ENCODE measurements at regions of chr5 and their contacts with region 1.

Region 1: DNA sequence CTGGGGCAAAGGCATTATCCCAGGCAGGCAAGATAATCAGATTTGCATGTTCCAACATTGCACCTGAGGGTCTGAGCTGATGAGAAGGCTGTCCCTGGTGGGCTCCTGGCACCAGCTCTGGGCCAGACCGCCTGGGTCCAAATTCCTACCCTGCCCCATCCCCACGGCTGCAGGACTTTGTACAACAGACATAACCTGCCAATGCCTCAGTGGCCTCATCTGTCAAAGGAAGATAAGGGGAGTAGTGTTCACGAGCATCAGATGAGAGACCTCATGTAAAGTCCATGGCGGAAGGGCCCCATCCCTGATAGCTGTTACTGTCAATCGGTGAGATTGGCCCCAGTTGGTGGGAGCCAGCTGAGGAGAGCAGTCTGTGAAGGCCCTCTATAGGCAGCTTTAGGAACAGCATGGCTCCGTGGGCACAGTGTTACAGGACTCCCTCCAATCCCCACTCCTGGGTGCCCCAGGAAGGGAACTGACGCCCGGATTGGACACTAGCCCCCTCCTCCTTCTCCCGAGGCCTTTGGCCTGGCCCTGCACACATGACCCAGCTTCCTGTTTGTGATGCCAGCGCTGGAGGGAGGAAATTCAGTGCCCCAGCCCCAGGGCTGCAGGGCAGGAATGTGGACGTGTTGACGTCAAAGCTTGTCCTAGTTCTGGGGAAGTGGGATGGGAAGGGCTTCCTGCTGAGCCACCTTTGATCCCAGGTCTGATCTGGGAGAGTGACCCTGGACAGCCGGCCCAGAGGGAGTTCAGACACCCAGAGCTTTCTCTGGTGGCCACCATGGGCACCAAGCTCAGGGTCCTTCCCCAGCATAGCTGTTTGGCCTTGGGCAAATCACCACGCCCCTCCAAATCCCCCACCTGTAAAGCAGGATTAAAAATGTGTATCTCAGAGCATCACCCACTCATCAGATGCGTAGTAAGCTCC is 56.2 kb downstream of the DUSP1 start:
- DNase-seq: peak; percentile 91
- ATAC-seq: peak; percentile 83
- H3K4me3 ChIP-seq: peak overlapping the region in 2 of 3 experiments; percentile 15 to 49; a peak in 4 of 6 replicates
- H3K27ac ChIP-seq: peak overlapping the region; percentile 66
- H3K4me1 ChIP-seq: peaks cover 51% of the 10 kb centered on the region
- H3K27me3 ChIP-seq: no peaks in the 10 kb centered on the region
- CTCF ChIP-seq: peak; percentile 84
- EP300 ChIP-seq: peak in 1 of 2 experiments; percentile 69; a peak in 1 of 4 replicates
- POLR2A ChIP-seq: peak in 1 of 2 experiments; percentile 67; a peak in 2 of 4 replicates
- RAD21 ChIP-seq: peak; percentile 61

Region 2: DNA sequence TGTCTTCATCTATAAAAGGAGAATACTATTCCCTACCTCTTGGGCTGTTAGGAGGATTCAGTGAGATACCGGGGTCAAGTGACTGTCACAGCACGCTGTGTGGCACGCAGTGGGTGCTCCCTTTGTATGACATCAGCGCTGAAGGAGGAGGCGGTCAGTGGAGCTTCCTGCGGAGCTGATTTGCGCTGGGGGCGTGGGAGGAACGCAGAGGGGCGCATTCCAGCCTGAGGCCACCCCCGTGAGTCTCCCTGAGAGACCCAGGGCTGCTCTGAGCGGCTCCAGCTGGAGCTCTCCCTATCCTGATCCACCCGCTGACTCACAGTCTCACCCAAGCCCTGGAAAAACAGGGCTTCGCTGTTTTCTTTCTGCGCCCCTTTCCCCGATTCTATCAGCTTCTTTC is 98.0 kb before region 1 on chr5:
- CTCF ChIA-PET with region 1: no interaction called
- POLR2A ChIA-PET with region 1: no interaction called
- in situ Hi-C with region 1: no loop called
- intact Hi-C with region 1: no loop called
- DNase-seq: no peak
- ATAC-seq: no peak
- H3K4me3 ChIP-seq: no peak overlapping the region
- H3K27ac ChIP-seq: no peak overlapping the region
- H3K4me1 ChIP-seq: no peaks in the 10 kb centered on the region
- H3K27me3 ChIP-seq: peaks cover 0 to 43% of the 10 kb centered on the region in 2 experiments; a peak in 4 of 5 replicates
- CTCF ChIP-seq: no peak
- EP300 ChIP-seq: no peak
- POLR2A ChIP-seq: no peak
- RAD21 ChIP-seq: no peak

Region 3: DNA sequence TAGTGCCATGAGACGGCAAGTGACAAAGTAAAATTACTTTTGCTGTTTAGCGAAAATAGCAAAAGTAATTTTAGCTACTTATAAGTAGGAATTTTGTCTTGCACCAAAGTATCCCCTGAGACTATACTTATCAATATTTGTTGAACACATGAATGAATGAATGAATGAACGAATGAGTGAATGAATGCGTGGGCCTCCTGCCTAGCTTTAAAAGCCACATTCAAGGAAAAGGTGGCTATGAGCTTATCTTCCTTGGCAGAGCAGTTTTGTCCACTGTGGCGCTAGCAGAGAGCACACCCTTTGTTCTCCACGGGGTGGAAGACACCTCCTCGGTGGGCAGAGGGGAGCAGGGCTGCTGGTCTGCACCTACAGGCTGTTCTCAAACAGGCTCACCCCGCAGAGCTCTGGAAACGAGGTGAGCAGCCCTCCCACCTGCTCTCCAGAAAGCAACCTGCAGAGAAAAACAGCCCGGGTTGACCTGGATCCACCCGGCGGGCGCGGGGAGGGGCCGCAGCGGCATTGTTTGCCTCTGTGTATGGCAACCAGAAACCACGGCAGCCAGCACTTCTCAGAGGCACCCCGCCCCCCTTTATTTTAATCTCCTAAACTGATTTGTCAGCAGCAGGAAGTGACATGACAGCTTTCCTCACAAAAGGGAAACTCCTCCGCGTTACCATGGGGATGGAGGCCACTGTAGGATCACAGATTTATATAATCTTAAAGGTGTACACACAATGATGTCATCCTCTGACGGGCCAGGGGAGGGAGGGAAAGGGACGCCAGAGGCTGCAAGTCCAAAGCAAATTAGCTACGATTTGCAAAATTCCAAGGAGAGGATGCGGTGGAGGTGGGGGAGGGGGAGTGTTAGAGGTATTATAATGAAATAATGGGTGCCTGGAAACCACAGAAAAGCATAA is 50.4 kb after region 1 on chr5:
- CTCF ChIA-PET with region 1: interaction called, 6 read pairs
- POLR2A ChIA-PET with region 1: interaction called, 71 read pairs
- in situ Hi-C with region 1: no loop called
- intact Hi-C with region 1: no loop called
- DNase-seq: peak; percentile 99
- ATAC-seq: peak; percentile 78
- H3K4me3 ChIP-seq: peak overlapping the region; percentile 54 to 73 (median 54); a peak in 5 of 6 replicates
- H3K27ac ChIP-seq: peak overlapping the region; percentile 84
- H3K4me1 ChIP-seq: peaks cover 55% of the 10 kb centered on the region
- H3K27me3 ChIP-seq: no peaks in the 10 kb centered on the region; a peak in 2 of 5 replicates
- CTCF ChIP-seq: peak; percentile 22; the same call in 1 of the 2 replicates
- EP300 ChIP-seq: peak; percentile 61 to 73; a peak in 2 of 4 replicates
- POLR2A ChIP-seq: peak in 1 of 2 experiments; percentile 64; a peak in 1 of 4 replicates
- RAD21 ChIP-seq: peak; percentile 45

Region 4: DNA sequence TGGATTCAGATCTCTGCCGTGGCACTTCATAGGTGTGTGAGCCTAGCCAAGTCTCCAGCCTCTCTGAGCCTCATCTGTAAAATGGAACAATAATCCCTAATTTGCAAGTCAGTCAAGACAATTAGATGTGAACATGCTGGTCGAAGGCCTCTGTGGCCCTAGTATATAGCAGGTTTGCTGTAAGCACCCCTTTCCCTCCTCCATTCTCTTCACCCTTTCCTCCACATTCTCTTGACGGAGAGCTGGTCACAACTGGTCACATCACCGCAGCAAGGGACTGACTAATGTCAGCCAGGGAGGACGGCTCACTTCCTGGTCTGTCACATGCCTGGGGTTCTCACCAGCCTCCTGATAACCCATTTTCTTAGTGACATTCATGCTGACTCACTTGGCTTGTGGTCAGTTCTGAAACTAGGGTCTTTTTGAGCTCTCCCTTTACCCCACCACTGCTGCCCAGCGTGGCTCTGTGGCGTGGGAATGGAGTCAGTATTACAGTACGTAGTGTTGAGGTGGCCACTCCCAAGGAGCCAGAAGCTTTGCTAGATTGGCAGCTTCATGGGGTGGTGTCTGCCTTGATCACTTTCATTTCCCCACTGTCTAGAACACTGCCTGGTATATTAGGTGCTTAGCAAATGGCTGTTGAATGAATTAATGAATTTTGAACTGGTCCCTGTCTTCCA is 167.1 kb after region 1 on chr5:
- CTCF ChIA-PET with region 1: no interaction called
- POLR2A ChIA-PET with region 1: no interaction called
- in situ Hi-C with region 1: no loop called
- intact Hi-C with region 1: no loop called
- DNase-seq: no peak
- ATAC-seq: no peak
- H3K4me3 ChIP-seq: no peak overlapping the region
- H3K27ac ChIP-seq: no peak overlapping the region
- H3K4me1 ChIP-seq: peaks cover 11% of the 10 kb centered on the region
- H3K27me3 ChIP-seq: no peaks in the 10 kb centered on the region
- CTCF ChIP-seq: no peak
- EP300 ChIP-seq: no peak
- POLR2A ChIP-seq: no peak
- RAD21 ChIP-seq: no peak

Region 5: GRCh38 chr5:172902497-172903200 is 187.9 kb after region 1 on chr5:
- CTCF ChIA-PET with region 1: interaction called, 27 read pairs
- POLR2A ChIA-PET with region 1: interaction called, 7 read pairs
- in situ Hi-C with region 1: no loop called
- intact Hi-C with region 1: loop called (anchors 1 kb)
- DNase-seq: peak; percentile 90
- ATAC-seq: peak; percentile 84
- H3K4me3 ChIP-seq: no peak overlapping the region; a peak in 1 of 6 replicates
- H3K27ac ChIP-seq: peak overlapping the region; percentile 70
- H3K4me1 ChIP-seq: peaks cover 44% of the 10 kb centered on the region
- H3K27me3 ChIP-seq: no peaks in the 10 kb centered on the region
- CTCF ChIP-seq: peak; percentile 97
- EP300 ChIP-seq: peak in 1 of 2 experiments; percentile 78; a peak in 2 of 4 replicates
- POLR2A ChIP-seq: no peak
- RAD21 ChIP-seq: peak; percentile 80

Region 6: GRCh38 chr5:172910828-172911627 is 196.3 kb after region 1 on chr5:
- CTCF ChIA-PET with region 1: interaction called, 10 read pairs
- POLR2A ChIA-PET with region 1: interaction called, 3 read pairs
- in situ Hi-C with region 1: no loop called
- intact Hi-C with region 1: no loop called
- DNase-seq: peak; percentile 27
- ATAC-seq: peak; percentile 69
- H3K4me3 ChIP-seq: no peak overlapping the region
- H3K27ac ChIP-seq: no peak overlapping the region
- H3K4me1 ChIP-seq: no peaks in the 10 kb centered on the region
- H3K27me3 ChIP-seq: no peaks in the 10 kb centered on the region
- CTCF ChIP-seq: peak; percentile 62
- EP300 ChIP-seq: no peak
- POLR2A ChIP-seq: no peak
- RAD21 ChIP-seq: 0 out of 2 replicates have a peak, but pooled peaks have one; percentile 30

Region 7: DNA sequence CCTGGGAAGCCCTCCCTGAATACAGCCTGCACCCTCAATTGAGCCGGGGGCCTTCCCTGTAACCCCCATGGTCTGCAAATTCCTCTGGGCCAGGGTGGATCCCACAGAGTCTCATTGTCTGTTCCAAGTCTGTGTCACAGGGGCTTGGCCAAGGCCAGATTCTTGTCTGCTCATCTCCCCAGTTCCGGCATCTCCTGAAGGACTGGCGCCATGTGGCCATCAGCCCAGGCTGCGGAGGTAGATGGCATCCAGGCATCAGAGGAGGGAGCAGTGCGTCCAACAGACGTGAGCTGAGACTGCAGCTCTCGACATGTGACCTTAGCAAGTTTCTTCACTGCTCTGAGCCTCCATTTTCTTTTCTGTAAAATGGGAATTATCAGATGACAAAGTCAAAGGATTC is 207.2 kb after region 1 on chr5:
- CTCF ChIA-PET with region 1: no interaction called
- POLR2A ChIA-PET with region 1: no interaction called
- in situ Hi-C with region 1: no loop called
- intact Hi-C with region 1: no loop called
- DNase-seq: no peak
- ATAC-seq: no peak
- H3K4me3 ChIP-seq: no peak overlapping the region
- H3K27ac ChIP-seq: no peak overlapping the region
- H3K4me1 ChIP-seq: peaks cover 5% of the 10 kb centered on the region; the same call in 1 of the 2 replicates
- H3K27me3 ChIP-seq: no peaks in the 10 kb centered on the region
- CTCF ChIP-seq: no peak
- EP300 ChIP-seq: no peak
- POLR2A ChIP-seq: no peak
- RAD21 ChIP-seq: no peak

Region 8: DNA sequence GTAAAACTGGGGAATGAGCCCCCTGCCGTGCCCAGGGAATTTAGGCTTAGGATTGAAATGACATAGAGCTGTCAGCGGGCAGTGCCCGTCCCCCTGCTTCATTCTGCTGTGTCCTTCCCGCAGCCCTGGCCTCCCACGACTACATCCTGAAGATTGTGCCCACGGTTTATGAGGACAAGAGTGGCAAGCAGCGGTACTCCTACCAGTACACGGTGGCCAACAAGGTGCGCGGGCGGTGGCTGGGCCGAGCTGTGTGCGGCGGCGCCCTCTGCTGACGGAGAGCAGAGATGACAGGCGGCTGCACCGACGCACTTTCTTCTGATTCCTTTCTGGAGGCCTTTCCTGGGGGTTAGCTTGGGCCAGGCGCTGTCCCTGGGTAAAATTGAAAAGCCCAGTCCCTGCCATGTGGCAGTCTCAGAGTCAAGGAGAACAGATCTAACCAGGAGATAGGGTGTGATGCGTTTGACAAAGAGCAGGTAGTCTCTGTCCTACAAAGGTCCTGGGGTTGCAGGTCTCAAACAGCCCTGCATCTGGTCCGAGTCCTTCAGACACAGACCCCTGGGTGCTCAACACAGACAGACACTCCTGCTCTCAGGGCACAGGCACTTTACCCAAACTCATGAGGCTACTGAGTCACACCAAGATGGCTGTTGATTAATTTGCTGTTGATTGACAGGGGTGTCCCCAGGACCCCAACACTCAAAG is 217.7 kb after region 1 on chr5:
- CTCF ChIA-PET with region 1: interaction called, 66 read pairs
- POLR2A ChIA-PET with region 1: interaction called, 4 read pairs
- in situ Hi-C with region 1: no loop called
- intact Hi-C with region 1: loop called (anchors 1 kb)
- DNase-seq: peak; percentile 23
- ATAC-seq: peak; percentile 91
- H3K4me3 ChIP-seq: no peak overlapping the region
- H3K27ac ChIP-seq: no peak overlapping the region
- H3K4me1 ChIP-seq: no peaks in the 10 kb centered on the region
- H3K27me3 ChIP-seq: no peaks in the 10 kb centered on the region
- CTCF ChIP-seq: peak; percentile 95
- EP300 ChIP-seq: no peak
- POLR2A ChIP-seq: no peak
- RAD21 ChIP-seq: peak; percentile 94

Region 9: DNA sequence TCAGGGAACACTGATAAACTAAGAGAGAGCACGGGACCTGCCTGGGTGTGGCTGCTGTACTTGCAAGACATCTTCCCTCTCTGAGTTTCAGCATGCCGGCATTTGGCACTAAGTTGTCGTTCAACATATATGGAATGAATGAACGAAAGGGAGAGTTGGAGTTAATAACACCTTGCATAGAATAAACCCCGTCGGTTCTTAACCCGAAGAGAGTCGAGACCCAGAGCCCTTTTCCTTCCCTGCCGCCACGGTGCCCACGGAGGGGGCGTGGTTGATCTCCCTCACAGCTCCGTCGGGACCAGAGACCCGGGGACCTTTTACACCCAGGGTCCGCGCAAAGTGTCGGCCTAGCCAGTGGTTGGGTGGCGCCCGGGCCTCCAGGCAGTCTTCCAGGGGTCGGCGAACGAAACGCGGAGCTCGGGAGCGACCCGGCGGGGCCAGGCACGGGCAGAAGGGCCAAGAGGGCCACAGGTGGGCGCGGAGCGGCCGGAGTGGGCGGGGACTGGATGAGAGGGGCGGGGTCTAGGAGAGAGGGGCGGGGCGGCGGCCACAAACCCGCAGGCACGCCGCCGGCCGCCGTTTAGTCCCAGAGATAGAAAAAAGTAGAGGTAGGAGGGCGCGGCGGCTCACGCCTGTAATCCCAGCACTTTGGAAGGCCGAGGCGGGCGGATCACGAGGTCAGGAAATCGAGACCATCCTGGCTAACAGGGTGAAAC is 243.7 kb after region 1 on chr5:
- CTCF ChIA-PET with region 1: no interaction called
- POLR2A ChIA-PET with region 1: interaction called, 10 read pairs
- in situ Hi-C with region 1: no loop called
- intact Hi-C with region 1: no loop called
- DNase-seq: peak; percentile 47
- ATAC-seq: peak; percentile 88
- H3K4me3 ChIP-seq: peak overlapping the region; percentile 81 to 99 (median 91)
- H3K27ac ChIP-seq: peak overlapping the region; percentile 81
- H3K4me1 ChIP-seq: peaks cover 15% of the 10 kb centered on the region
- H3K27me3 ChIP-seq: peaks cover 0 to 2% of the 10 kb centered on the region in 2 experiments; a peak in 1 of 5 replicates
- CTCF ChIP-seq: no peak; the same call in 1 of the 2 replicates
- EP300 ChIP-seq: no peak
- POLR2A ChIP-seq: peak in 1 of 2 experiments; percentile 41; a peak in 1 of 4 replicates
- RAD21 ChIP-seq: no peak

Region 10: DNA sequence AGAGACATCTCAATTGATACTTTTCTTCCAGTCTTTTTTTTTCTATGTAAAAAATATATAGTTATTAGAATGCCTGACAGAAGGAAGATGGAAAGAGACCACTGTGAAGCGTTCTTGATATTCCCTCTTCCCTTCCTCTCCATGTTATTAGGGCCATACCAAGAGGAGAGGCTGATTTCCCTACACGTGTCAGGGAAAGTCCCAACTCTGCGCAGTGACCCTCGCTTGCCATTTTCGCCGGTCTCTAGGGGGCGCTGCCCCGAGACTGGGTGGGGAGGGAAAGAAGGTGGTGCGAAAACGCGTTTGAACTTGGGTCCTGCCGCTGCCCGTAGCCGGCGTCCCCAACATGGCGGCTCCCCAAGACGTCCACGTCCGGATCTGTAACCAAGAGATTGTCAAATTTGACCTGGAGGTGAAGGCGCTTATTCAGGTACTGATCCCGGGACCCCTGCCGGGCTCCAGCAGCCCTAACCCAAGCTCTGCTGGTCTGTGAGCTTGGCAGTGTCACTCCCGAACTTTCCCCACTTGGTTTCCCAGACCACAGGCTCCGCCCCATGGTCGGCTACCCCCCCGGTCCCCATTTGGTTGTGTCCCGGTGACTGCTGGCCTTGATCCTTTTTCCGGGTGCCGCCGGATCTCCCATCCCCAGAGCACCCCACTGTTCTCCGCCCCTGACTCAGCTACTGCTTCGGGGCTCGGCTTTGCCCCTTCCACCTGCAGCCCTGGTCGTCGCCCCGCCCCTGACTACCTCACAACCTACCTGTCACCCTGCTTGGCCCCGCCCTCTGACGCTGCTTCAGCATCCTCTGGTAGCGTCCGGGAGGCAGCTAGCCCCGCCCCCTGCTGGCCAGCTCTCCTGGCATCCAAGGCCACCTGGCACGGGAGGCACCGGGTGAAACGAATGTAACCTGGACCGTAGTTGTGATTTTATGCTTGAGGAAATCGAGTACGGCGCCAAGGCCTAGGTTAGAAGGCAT is 429.7 kb after region 1 on chr5 and contains the start of gene BNIP1:
- CTCF ChIA-PET with region 1: no interaction called
- POLR2A ChIA-PET with region 1: no interaction called
- in situ Hi-C with region 1: loop called (anchors 25 kb)
- intact Hi-C with region 1: loop called (anchors 10 kb)
- DNase-seq: peak; percentile 90
- ATAC-seq: peak; percentile 93
- H3K4me3 ChIP-seq: peak within 1 kb of the TSS; percentile 77 to 90 (median 85)
- H3K27ac ChIP-seq: peak within 1 kb of the TSS; percentile 70
- H3K4me1 ChIP-seq: peaks cover 19% of the 10 kb centered on the region
- H3K27me3 ChIP-seq: no peaks in the 10 kb centered on the region; a peak in 1 of 5 replicates
- CTCF ChIP-seq: peak; percentile 97
- EP300 ChIP-seq: peak; percentile 32 to 70; a peak in 2 of 4 replicates
- POLR2A ChIP-seq: peak; percentile 67 to 84
- RAD21 ChIP-seq: peak; percentile 54
- total RNA-seq, gene BNIP1: 16.9 and 20.6 TPM in 2 replicates